MCF 10A (cell line): ENCODE measurements at regions of chr13 and their contacts with region 1.

Region 1: DNA sequence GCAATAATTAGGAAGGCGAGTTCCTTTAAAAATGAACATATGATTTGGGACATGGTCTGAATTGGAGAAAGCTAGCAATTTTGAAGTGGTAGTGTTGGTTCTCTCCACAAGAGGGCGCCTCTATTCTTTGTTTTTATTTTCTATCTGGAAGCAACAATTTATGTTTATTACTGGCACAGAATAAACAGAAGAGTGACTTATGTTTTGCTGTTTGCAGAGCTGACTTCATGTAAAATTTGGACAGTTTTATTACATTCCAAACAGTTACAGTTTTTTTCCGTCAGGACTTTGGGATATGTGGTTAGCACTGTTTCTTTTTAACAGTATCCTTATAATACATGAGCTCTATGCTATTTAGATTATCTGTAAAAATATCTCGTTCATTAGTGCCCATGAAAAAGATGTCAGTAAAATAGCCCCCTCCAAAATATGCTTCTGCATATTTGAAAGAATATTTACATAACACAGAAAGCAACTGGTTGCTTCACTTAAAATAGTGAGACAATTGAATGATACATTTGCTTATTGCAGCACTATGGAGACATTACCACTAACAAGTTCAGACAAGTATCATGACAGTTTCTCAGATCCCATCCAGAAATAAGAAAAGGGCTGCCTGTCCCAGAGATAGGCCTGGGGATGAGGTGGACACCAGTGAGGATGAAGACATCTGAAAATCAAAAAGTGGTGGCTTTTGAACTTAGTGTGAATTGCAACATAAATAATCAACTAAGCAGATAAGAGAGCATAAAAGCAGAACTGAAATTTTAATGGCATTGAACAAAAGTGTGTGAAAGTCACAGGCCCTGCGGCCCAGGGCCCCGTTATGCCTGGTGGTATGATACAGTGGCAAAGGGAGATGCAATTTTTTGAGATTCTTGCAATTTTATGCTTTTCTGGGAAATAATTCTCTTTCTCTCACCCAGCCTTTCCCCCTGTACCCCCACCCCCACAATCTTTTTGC is 32.3 kb upstream of the FGF9 start:
- DNase-seq: peak; percentile 52
- H3K4me3 Mint-ChIP-seq: no peak overlapping the region
- H3K27ac Mint-ChIP-seq: peak overlapping the region; percentile 47
- H3K4me1 Mint-ChIP-seq: peaks cover 20% of the 10 kb centered on the region
- H3K27me3 Mint-ChIP-seq: no peaks in the 10 kb centered on the region
- CTCF ChIP-seq: peak; percentile 62

Region 2: DNA sequence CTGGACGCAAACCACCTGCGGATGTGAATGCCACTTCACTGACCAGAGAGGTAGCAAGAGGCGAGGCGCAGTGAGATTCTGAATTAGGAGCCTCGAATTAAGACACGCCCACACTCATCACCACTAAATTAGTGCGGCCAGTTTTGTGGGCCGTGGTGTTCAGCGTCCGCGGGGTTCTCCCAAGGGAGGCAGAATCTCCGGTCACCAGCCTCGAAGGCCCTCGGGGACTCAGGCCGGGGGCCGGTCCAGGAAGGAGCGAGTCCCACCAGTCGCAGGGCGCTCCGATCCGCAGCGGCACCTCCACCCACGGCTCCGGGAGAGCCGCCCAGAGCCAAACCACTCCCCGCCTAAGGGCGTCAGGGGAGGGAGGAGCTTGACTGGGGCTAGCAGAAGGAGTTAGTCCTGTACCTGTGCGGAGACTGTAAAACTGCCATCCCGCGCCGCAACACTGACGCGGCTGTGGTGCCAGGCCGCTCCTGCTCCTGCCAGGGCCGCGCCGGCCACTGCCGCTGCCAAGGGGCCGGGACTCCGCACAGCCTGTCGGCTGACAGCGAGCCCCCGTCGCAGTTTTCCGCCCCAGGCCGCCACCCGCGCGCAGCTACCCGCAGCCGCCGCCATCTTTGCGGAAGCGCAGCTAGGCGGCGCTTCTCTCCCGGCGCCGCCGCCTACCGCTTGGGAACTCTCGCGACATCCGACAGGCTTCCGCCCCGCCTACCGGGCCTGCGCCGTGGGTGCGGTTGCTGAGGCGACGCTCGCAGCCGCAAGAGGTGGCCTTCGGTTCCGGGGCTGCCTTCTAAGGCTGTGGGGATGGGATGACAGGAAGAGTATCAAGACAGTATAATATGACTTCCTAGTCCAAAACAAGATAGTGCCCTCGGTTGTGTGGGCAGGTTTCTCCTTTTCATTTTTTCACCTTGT is 34.8 kb before region 1 on chr13 and contains the start of gene MICU2:
- CTCF ChIA-PET with region 1: no interaction called
- POLR2A ChIA-PET with region 1: interaction called, 14 read pairs
- intact Hi-C with region 1: no loop called
- DNase-seq: peak; percentile 94
- H3K4me3 Mint-ChIP-seq: peak within 1 kb of the TSS; percentile 73
- H3K27ac Mint-ChIP-seq: peak within 1 kb of the TSS; percentile 75
- H3K4me1 Mint-ChIP-seq: peaks cover 24% of the 10 kb centered on the region
- H3K27me3 Mint-ChIP-seq: no peaks in the 10 kb centered on the region
- CTCF ChIP-seq: no peak
- total RNA-seq, gene MICU2: 18.7 and 21.8 TPM in 2 replicates

Region 3: GRCh38 chr13:21670883-21671619 is 32.5 kb after region 1 on chr13 and contains the start of gene FGF9:
- CTCF ChIA-PET with region 1: interaction called, 18 read pairs
- POLR2A ChIA-PET with region 1: interaction called, 17 read pairs
- intact Hi-C with region 1: loop called (anchors 2 kb)
- DNase-seq: peak; percentile 73
- H3K4me3 Mint-ChIP-seq: peak within 1 kb of the TSS; percentile 88
- H3K27ac Mint-ChIP-seq: no peak within 1 kb of the TSS
- H3K4me1 Mint-ChIP-seq: no peaks in the 10 kb centered on the region
- H3K27me3 Mint-ChIP-seq: peaks cover 3% of the 10 kb centered on the region
- CTCF ChIP-seq: no peak
- total RNA-seq, gene FGF9: 0.35 TPM in 1 of 2 replicates, not detected in the other

Region 4: DNA sequence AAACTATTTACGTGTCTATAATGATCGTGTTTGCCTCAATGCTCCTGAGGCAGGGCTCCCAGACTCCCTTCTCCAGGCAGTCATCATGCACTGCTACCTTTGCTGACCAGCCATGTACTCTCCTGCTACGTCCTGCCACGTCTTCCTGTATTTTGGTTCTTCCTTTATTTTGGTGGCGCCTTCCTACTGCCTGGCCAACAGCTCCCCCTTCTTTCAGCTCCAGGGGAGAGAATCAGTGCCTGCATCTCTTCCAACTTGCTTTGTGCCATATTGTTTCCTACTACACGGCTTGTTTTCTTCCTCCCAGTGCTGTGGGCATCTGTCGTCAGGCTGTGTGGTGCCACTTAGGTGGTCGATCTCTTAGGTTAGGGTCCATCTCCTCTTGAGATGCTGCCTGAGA is 128.4 kb after region 1 on chr13:
- CTCF ChIA-PET with region 1: interaction called, 3 read pairs
- POLR2A ChIA-PET with region 1: no interaction called
- intact Hi-C with region 1: loop called (anchors 10 kb)
- DNase-seq: no peak
- H3K4me3 Mint-ChIP-seq: no peak overlapping the region
- H3K27ac Mint-ChIP-seq: no peak overlapping the region
- H3K4me1 Mint-ChIP-seq: no peaks in the 10 kb centered on the region
- H3K27me3 Mint-ChIP-seq: no peaks in the 10 kb centered on the region
- CTCF ChIP-seq: no peak

Region 5: GRCh38 chr13:22757530-22758120 is 1119.0 kb after region 1 on chr13:
- CTCF ChIA-PET with region 1: interaction called, 12 read pairs
- POLR2A ChIA-PET with region 1: interaction called, 3 read pairs
- intact Hi-C with region 1: loop called (anchors 1 kb)
- DNase-seq: no peak
- H3K4me3 Mint-ChIP-seq: no peak overlapping the region
- H3K27ac Mint-ChIP-seq: no peak overlapping the region
- H3K4me1 Mint-ChIP-seq: no peaks in the 10 kb centered on the region
- H3K27me3 Mint-ChIP-seq: no peaks in the 10 kb centered on the region
- CTCF ChIP-seq: peak; percentile 69